RWPE1 (cell line): ENCODE measurements at regions of chr1 and their contacts with region 1.

Region 1: GRCh38 chr1:52002038-52002917 is 11.8 kb upstream of the RAB3B start:
- DNase-seq: peak; percentile 90
- H3K27ac ChIP-seq: no peak overlapping the region
- CTCF ChIP-seq: peak; percentile 86

Region 2: GRCh38 chr1:51897699-51898031 is 104.6 kb before region 1 on chr1:
- CTCF ChIA-PET with region 1: interaction called, 18 read pairs
- POLR2A ChIA-PET with region 1: no interaction called
- DNase-seq: peak; percentile 87
- H3K27ac ChIP-seq: peak overlapping the region; percentile 96
- CTCF ChIP-seq: no peak

Region 3: GRCh38 chr1:52098139-52098871 is 96.0 kb after region 1 on chr1:
- CTCF ChIA-PET with region 1: no interaction called
- POLR2A ChIA-PET with region 1: no interaction called
- DNase-seq: no peak
- H3K27ac ChIP-seq: no peak overlapping the region
- CTCF ChIP-seq: no peak

Region 4: DNA sequence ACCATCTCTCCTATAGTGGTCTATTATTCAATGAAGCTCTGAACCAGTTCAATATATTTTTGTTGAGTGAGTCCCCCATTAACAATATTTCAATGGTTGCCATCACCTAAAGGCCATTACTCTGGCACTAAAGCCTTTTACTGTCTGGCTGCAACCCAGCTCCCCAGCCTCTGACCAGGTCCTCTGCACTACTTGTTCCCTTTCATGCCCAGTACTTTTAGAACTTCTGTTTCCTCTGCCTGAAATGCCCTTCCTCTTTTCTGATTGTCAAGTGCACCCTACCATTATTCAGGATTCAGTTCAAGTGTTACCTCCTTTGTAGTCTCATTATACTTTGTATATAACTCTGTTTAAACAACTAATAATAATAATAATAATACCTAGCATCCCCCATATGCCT is 109.2 kb after region 1 on chr1:
- CTCF ChIA-PET with region 1: no interaction called
- POLR2A ChIA-PET with region 1: no interaction called
- DNase-seq: no peak
- H3K27ac ChIP-seq: no peak overlapping the region
- CTCF ChIP-seq: no peak

Region 5: GRCh38 chr1:52386458-52386857 is 384.2 kb after region 1 on chr1:
- CTCF ChIA-PET with region 1: no interaction called
- POLR2A ChIA-PET with region 1: no interaction called
- DNase-seq: no peak
- H3K27ac ChIP-seq: no peak overlapping the region
- CTCF ChIP-seq: no peak